Activated CD4-positive, alpha-beta T cell treated with anti-CD3 and anti-CD28 coated beads, Interleukin-2, amount 10 ng/mL, durations not matched to agents 7 days and 5 days (primary cell): ENCODE measurements at regions of chr12 and their contacts with region 1.

Region 1: DNA sequence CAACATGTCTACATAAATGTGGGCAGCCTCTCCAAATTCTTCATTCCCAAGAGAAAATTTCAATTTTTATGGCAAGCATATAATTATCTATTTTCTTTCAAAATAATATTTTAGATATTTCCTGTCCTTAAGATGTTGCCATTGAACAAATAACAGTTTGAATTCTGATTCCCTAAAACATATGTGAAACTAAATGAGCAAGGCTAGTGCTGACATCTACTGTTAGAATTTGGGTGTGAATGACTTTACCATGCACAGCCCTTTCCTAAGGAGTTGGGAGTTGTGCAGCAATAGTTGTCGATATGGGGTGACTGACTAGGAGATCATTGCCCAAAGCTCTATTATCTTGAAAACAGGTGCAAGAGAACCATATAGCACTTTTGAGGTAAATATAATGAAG is 108.2 kb upstream of the SLC38A4 start:
- DNase-seq: no peak
- H3K4me3 Mint-ChIP-seq: no peak overlapping the region
- H3K27ac Mint-ChIP-seq: no peak overlapping the region
- H3K4me1 Mint-ChIP-seq: no peaks in the 10 kb centered on the region
- H3K27me3 Mint-ChIP-seq: peaks cover 31% of the 10 kb centered on the region

Region 2: GRCh38 chr12:46082490-46083200 is 851.3 kb before region 1 on chr12:
- CTCF ChIA-PET with region 1: no interaction called
- POLR2A ChIA-PET with region 1: interaction called, 13 read pairs
- DNase-seq: no peak
- H3K4me3 Mint-ChIP-seq: no peak overlapping the region
- H3K27ac Mint-ChIP-seq: no peak overlapping the region
- H3K4me1 Mint-ChIP-seq: no peaks in the 10 kb centered on the region
- H3K27me3 Mint-ChIP-seq: no peaks in the 10 kb centered on the region

Region 3: DNA sequence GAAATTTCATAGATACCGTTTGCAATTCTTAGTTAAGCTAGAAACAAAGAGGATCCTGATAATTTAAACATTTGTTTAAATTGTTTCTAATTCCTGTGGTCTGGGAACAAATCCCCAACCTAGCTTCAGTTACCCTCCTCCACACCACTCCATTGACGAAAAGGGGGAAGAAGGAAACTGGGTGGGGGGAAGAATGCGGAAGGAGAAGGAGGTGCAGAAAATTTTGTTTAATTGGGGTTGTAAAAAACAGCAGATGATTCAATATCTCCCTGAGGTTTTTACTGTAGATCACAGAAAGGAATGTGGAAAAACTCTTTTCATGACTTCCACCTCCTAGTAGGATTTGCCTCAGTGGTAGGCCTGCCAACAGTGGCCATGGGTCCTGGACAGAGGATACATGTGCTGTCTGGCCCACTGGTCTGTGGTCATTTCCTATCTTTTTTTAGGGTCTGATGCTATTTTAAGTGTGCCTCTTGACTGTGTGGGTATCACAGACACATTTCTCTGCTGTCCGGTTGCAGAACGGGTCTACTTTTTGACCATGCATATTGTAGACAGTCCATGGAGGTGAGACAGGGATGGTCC is 22.6 kb after region 1 on chr12:
- CTCF ChIA-PET with region 1: no interaction called
- POLR2A ChIA-PET with region 1: no interaction called
- DNase-seq: no peak
- H3K4me3 Mint-ChIP-seq: no peak overlapping the region
- H3K27ac Mint-ChIP-seq: no peak overlapping the region
- H3K4me1 Mint-ChIP-seq: no peaks in the 10 kb centered on the region
- H3K27me3 Mint-ChIP-seq: peaks cover 12% of the 10 kb centered on the region